ENCODE measurements at regions of chr13 and their contacts with region 1.

Region 1: GRCh38 chr13:77002590-77003190 is 10.8 kb downstream of the CLN5 start:
- DNase-seq: no peak
- H3K4me3 ChIP-seq: no peak overlapping the region
- H3K27ac ChIP-seq: no peak overlapping the region
- H3K27me3 ChIP-seq: no peaks in the 10 kb centered on the region
- CTCF ChIP-seq: peak; percentile 83

Region 2: DNA sequence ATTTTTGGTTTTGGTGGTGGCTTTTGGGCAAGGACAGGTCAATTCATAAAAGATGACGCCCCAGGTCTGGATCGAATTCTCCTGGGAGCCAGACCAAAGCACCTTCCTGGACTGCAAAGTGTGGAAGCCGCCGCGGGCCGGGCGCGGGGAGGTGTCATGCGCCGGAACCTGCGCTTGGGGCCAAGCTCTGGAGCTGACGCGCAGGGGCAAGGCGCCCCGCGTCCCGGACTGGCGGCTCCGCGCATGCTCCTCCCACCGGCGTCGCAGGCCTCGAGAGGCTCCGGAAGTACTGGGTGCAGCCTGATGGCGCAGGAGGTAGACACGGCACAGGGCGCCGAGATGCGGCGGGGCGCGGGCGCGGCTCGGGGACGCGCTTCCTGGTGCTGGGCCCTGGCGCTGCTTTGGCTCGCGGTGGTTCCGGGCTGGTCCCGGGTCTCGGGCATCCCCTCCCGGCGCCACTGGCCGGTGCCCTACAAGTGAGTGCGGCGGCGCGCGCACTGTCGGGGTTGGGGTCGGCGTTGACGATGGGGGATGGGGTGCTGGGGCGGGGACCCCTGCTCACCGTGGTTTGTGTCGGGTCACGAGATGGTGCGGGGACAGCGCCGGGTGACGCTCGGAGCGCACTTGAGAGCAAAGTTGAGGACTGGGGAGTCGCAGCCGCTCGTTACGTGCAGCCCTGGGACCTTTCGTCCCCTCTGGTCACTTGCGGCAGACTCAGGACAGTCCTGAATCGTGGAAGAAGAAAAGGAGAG is 10.7 kb before region 1 on chr13 and contains the start of gene CLN5:
- CTCF ChIA-PET with region 1: interaction called, 27 read pairs
- POLR2A ChIA-PET with region 1: no interaction called
- DNase-seq: peak; percentile 67
- H3K4me3 ChIP-seq: peak within 1 kb of the TSS; percentile 95
- H3K27ac ChIP-seq: peak within 1 kb of the TSS; percentile 61
- H3K27me3 ChIP-seq: no peaks in the 10 kb centered on the region
- CTCF ChIP-seq: peak; percentile 2; the same call in 1 of the 2 replicates
- polyA plus RNA-seq, gene CLN5: 28.7 and 38.6 TPM in 2 replicates

Region 3: DNA sequence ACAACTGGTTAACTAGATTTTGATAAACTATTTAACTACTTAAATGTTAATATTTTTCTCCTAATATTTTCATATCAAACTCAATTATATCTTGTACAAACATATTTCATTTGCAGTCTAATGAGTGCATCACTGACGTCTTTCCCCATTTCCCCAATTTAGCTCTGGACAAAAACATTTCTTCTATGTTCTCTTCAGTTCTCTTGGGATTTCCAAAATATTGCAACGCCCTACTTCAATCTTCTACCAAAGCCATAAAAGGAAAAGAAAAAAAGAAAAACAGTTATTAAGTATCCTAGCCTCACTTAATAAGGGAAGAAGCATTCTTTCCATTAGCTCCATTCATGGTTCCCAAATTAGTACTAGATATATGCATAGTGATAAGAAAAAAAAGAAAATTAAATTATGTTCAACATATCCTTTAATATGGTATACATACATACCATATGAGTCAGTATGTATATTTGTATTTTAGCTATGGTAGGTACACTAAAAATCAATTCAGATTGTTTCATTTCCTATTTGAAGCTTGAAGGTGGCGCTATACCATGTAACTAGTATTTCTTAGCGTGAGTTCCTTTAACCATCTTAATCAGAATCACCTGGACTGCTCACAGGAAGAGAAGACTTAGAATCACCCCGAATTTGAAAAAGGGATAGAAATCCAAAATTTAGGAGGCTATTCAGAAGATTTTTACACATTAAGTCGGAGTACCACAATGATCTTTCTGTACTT is 14.4 kb after region 1 on chr13:
- CTCF ChIA-PET with region 1: interaction called, 20 read pairs
- POLR2A ChIA-PET with region 1: no interaction called
- DNase-seq: no peak
- H3K4me3 ChIP-seq: no peak overlapping the region
- H3K27ac ChIP-seq: no peak overlapping the region
- H3K27me3 ChIP-seq: no peaks in the 10 kb centered on the region
- CTCF ChIP-seq: no peak